ENCODE measurements at regions of chr4 and their contacts with region 1.

Region 1: GRCh38 chr4:2262143-2262943 is 434 bp upstream of the MXD4 start:
- DNase-seq: peak; percentile 95 to 99 (median 97)
- ATAC-seq: peak; percentile 87
- H3K4me3 ChIP-seq: peak overlapping the region; percentile 67 to 90
- H3K4me3 Mint-ChIP-seq: peak overlapping the region; percentile 78
- H3K27ac ChIP-seq: peak overlapping the region; percentile 93 to 95
- H3K27ac Mint-ChIP-seq: peak overlapping the region; percentile 85
- H3K4me1 ChIP-seq: peaks cover 25% of the 10 kb centered on the region
- H3K4me1 Mint-ChIP-seq: peaks cover 15% of the 10 kb centered on the region
- H3K27me3 ChIP-seq: no peaks in the 10 kb centered on the region
- H3K27me3 Mint-ChIP-seq: no peaks in the 10 kb centered on the region
- CTCF ChIP-seq: no peak

Region 2: DNA sequence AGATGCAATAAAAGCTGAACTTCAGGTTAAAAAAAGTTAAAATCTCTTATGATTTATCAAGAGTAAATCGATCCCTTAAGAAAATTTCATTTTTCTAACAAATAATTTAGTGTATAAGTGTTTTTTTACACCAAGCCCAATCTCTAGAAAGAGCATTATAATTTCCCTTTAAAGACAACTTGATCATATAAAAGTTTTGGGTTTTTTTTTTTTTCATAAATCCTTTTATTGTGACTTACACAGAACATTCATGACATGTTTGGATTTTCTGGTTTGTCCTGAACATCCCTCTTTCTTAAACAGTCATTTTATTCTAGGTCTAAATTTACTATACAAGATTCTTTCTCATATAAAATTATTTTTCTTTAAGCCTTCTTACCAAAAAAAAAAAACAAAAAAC is 1769.9 kb before region 1 on chr4:
- CTCF ChIA-PET with region 1: no interaction called
- POLR2A ChIA-PET with region 1: no interaction called
- intact Hi-C with region 1: no loop called
- DNase-seq: no peak
- ATAC-seq: no peak
- H3K4me3 ChIP-seq: no peak overlapping the region
- H3K4me3 Mint-ChIP-seq: no peak overlapping the region
- H3K27ac ChIP-seq: no peak overlapping the region
- H3K27ac Mint-ChIP-seq: no peak overlapping the region
- H3K4me1 ChIP-seq: peaks cover 4% of the 10 kb centered on the region
- H3K4me1 Mint-ChIP-seq: peaks cover 17% of the 10 kb centered on the region
- H3K27me3 ChIP-seq: no peaks in the 10 kb centered on the region
- H3K27me3 Mint-ChIP-seq: no peaks in the 10 kb centered on the region
- CTCF ChIP-seq: no peak

Region 3: GRCh38 chr4:2008875-2009703 is 253.3 kb before region 1 on chr4 and contains the start of gene NELFA:
- CTCF ChIA-PET with region 1: no interaction called
- POLR2A ChIA-PET with region 1: no interaction called
- intact Hi-C with region 1: loop called in 1 of 2 experiments (anchors 5 kb)
- DNase-seq: peak; percentile 86 to 98 (median 96)
- ATAC-seq: peak; percentile 83
- H3K4me3 ChIP-seq: peak within 1 kb of the TSS; percentile 96 to 100
- H3K4me3 Mint-ChIP-seq: peak within 1 kb of the TSS; percentile 92
- H3K27ac ChIP-seq: peak within 1 kb of the TSS; percentile 98 to 99
- H3K27ac Mint-ChIP-seq: peak within 1 kb of the TSS; percentile 96
- H3K4me1 ChIP-seq: peaks cover 18% of the 10 kb centered on the region
- H3K4me1 Mint-ChIP-seq: peaks cover 32% of the 10 kb centered on the region
- H3K27me3 ChIP-seq: no peaks in the 10 kb centered on the region
- H3K27me3 Mint-ChIP-seq: no peaks in the 10 kb centered on the region
- CTCF ChIP-seq: no peak
- total RNA-seq, gene NELFA: 39.0 to 45.8 TPM

Region 4: DNA sequence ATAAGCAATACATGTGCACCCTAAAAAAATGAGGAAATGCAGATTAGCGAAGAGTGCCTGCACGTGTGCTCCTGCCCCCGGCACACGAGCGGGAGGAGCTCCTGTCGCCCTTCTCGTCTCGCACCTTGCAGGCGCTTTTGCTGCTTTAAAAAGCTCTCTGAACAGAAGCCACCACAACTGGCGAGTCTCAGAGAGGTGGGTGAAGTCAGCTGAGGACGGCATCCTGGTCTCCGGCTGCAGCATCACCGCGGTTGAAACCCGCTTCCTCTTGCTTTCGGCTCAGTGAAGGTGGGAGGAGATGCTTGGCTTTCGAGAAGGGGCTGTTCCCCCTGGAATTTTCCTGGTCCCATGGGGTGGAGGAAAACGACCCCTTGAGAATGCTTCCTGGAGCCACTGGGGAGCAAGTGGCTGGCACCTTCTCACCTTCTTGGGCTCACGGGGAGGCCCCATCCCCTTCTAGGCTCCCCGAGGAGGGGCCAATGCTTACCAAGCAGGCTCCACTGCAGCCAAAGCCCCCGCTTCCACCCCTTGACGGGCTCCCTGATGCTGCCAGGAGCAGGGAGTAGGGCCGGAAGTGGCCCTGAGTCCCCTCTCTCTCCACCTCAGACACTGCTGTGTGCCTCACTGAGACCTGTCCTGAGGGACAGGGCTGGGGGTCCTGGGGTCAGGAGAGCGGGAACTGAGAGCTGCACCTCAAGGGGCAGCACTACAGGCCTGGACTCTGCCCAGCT is 28.8 kb after region 1 on chr4:
- CTCF ChIA-PET with region 1: no interaction called
- POLR2A ChIA-PET with region 1: interaction called, 26 read pairs
- intact Hi-C with region 1: loop called in 1 of 2 experiments (anchors 5 kb)
- DNase-seq: peak in 8 of 9 experiments; percentile 61 to 96 (median 81)
- ATAC-seq: peak; percentile 88
- H3K4me3 ChIP-seq: peak overlapping the region; percentile 19 to 29
- H3K4me3 Mint-ChIP-seq: peak overlapping the region; percentile 64
- H3K27ac ChIP-seq: peak overlapping the region; percentile 80 to 81
- H3K27ac Mint-ChIP-seq: peak overlapping the region; percentile 98
- H3K4me1 ChIP-seq: peaks cover 72% of the 10 kb centered on the region
- H3K4me1 Mint-ChIP-seq: peaks cover 56% of the 10 kb centered on the region
- H3K27me3 ChIP-seq: no peaks in the 10 kb centered on the region
- H3K27me3 Mint-ChIP-seq: no peaks in the 10 kb centered on the region
- CTCF ChIP-seq: no peak

Region 5: DNA sequence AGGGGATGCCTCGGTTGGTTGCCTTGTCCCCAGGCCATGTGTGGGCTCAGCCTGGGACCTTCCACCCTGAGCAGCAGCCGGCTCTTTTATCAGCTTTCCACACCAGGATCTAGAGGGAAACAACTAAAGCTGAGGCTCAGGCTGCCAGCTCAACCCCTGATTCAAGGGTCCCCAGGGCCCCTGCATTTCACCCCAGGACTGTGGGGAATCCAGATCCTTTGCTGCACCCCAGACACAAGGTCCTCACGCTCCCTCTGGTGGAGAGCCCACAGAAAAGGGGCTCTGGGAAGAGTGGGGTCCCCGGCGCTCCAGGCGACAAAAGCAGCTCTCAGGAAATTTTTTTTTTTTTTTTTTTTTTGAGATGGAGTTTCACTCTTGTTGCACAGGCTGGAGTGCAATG is 91.8 kb after region 1 on chr4:
- CTCF ChIA-PET with region 1: interaction called, 3 read pairs
- POLR2A ChIA-PET with region 1: interaction called, 11 read pairs
- intact Hi-C with region 1: loop called in 1 of 2 experiments (anchors 1 kb)
- DNase-seq: peak in 6 of 9 experiments; percentile 35 to 70 (median 53)
- ATAC-seq: peak; percentile 73
- H3K4me3 ChIP-seq: no peak overlapping the region
- H3K4me3 Mint-ChIP-seq: no peak overlapping the region
- H3K27ac ChIP-seq: no peak overlapping the region
- H3K27ac Mint-ChIP-seq: no peak overlapping the region
- H3K4me1 ChIP-seq: peaks cover 15% of the 10 kb centered on the region
- H3K4me1 Mint-ChIP-seq: peaks cover 9% of the 10 kb centered on the region
- H3K27me3 ChIP-seq: no peaks in the 10 kb centered on the region
- H3K27me3 Mint-ChIP-seq: no peaks in the 10 kb centered on the region
- CTCF ChIP-seq: peak; percentile 49

Region 6: GRCh38 chr4:2412885-2413716 is 150.8 kb after region 1 on chr4:
- CTCF ChIA-PET with region 1: interaction called, 3 read pairs
- POLR2A ChIA-PET with region 1: interaction called, 13 read pairs
- intact Hi-C with region 1: loop called (anchors 1 to 5 kb)
- DNase-seq: peak; percentile 71 to 98 (median 86)
- ATAC-seq: peak; percentile 77
- H3K4me3 ChIP-seq: peak overlapping the region; percentile 25 to 38
- H3K4me3 Mint-ChIP-seq: peak overlapping the region; percentile 73
- H3K27ac ChIP-seq: peak overlapping the region; percentile 87 to 91
- H3K27ac Mint-ChIP-seq: peak overlapping the region; percentile 97
- H3K4me1 ChIP-seq: peaks cover 62% of the 10 kb centered on the region
- H3K4me1 Mint-ChIP-seq: peaks cover 68% of the 10 kb centered on the region
- H3K27me3 ChIP-seq: peaks cover 4 to 7% of the 10 kb centered on the region in 2 experiments
- H3K27me3 Mint-ChIP-seq: peaks cover 4% of the 10 kb centered on the region
- CTCF ChIP-seq: peak; percentile 31

Region 7: GRCh38 chr4:2468445-2469192 is 206.3 kb after region 1 on chr4 and contains the start of gene RNF4:
- CTCF ChIA-PET with region 1: no interaction called
- POLR2A ChIA-PET with region 1: interaction called, 9 read pairs
- intact Hi-C with region 1: loop called (anchors 1 to 2 kb)
- DNase-seq: peak; percentile 90 to 98 (median 94)
- ATAC-seq: peak; percentile 82
- H3K4me3 ChIP-seq: peak within 1 kb of the TSS; percentile 54 to 91
- H3K4me3 Mint-ChIP-seq: peak within 1 kb of the TSS; percentile 96
- H3K27ac ChIP-seq: peak within 1 kb of the TSS; percentile 95 to 97
- H3K27ac Mint-ChIP-seq: peak within 1 kb of the TSS; percentile 98
- H3K4me1 ChIP-seq: peaks cover 42% of the 10 kb centered on the region
- H3K4me1 Mint-ChIP-seq: peaks cover 45% of the 10 kb centered on the region
- H3K27me3 ChIP-seq: no peaks in the 10 kb centered on the region
- H3K27me3 Mint-ChIP-seq: no peaks in the 10 kb centered on the region
- CTCF ChIP-seq: no peak
- total RNA-seq, gene RNF4: 130 to 134 TPM

Measured in CD8-positive, alpha-beta T cell (primary cell).